B cell (primary cell): ENCODE measurements at regions of chr19 and their contacts with region 1.

Region 1: DNA sequence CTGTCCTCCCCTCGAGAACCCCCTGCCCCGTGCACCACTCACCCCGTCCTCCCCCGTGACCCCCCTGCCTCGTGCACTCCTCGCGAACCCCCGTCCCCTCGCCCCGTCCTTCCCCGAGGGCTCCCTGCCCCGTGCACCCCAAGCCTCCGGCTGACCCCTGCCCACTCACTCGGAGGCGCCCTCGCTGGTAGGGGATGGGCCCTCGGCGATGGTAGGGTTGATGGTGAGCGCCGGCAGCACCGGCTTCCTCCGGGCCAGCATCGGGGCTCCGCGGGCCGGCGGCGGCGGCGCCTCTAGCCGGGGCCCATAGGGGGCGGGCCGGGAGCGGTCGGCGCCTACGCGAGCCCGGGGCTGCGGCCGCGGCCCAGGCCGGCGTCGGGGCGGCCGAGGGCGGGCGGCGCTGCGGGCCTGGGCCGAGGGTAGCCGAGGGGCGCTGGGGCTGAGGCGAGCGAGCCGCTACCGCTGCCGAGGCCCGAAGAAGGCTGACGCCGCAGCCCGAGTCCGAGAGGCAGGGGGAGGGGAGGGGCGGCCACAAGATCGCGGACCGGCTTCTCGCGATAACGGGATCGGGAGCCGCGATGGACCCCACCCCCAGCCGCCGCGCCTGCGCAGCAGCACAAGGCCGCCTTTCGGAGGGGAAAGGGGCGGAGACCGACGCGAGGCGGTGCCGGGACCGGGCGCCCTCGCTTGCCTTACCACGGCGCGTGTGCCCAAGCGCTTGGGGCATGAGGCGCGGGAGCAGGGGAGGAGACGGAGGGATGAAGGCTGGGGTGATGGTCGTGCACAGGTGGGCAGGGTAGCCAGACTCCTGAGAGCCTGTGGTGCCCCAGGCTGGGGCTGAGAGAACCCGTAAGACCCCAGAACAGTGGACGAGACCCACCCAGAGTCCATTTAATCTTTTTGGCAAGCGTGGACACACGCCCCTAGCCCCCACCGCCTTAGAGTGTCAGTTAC is at the start of gene MAP2K2:
- DNase-seq: peak; percentile 97
- ATAC-seq: peak; percentile 96
- H3K4me3 ChIP-seq: peak within 1 kb of the TSS; percentile 51 to 81 (median 62)
- H3K4me3 Mint-ChIP-seq: peak within 1 kb of the TSS; percentile 87
- H3K27ac ChIP-seq: peak within 1 kb of the TSS; percentile 56 to 85
- H3K27ac Mint-ChIP-seq: peak within 1 kb of the TSS; percentile 90
- H3K4me1 ChIP-seq: peaks cover 16 to 18% of the 10 kb centered on the region in 2 donors
- H3K4me1 Mint-ChIP-seq: peaks cover 20% of the 10 kb centered on the region
- H3K27me3 ChIP-seq: no peaks in the 10 kb centered on the region
- H3K27me3 Mint-ChIP-seq: no peaks in the 10 kb centered on the region
- CTCF ChIP-seq: no peak
- total RNA-seq, gene MAP2K2: 137 and 138 TPM in 2 replicates

Region 2: GRCh38 chr19:4007021-4007835 is 116.7 kb before region 1 on chr19 and contains the start of gene PIAS4:
- CTCF ChIA-PET with region 1: no interaction called
- POLR2A ChIA-PET with region 1: no interaction called
- intact Hi-C with region 1: loop called (anchors 1 kb)
- DNase-seq: peak; percentile 98
- ATAC-seq: peak; percentile 86
- H3K4me3 ChIP-seq: peak within 1 kb of the TSS; percentile 27 to 84 (median 74)
- H3K4me3 Mint-ChIP-seq: peak within 1 kb of the TSS; percentile 93
- H3K27ac ChIP-seq: peak within 1 kb of the TSS; percentile 55 to 71
- H3K27ac Mint-ChIP-seq: peak within 1 kb of the TSS; percentile 92
- H3K4me1 ChIP-seq: peaks cover 14 to 35% of the 10 kb centered on the region in 2 donors
- H3K4me1 Mint-ChIP-seq: peaks cover 33% of the 10 kb centered on the region
- H3K27me3 ChIP-seq: no peaks in the 10 kb centered on the region
- H3K27me3 Mint-ChIP-seq: no peaks in the 10 kb centered on the region
- CTCF ChIP-seq: no peak
- total RNA-seq, gene PIAS4: 56.8 and 57.2 TPM in 2 replicates

Region 3: DNA sequence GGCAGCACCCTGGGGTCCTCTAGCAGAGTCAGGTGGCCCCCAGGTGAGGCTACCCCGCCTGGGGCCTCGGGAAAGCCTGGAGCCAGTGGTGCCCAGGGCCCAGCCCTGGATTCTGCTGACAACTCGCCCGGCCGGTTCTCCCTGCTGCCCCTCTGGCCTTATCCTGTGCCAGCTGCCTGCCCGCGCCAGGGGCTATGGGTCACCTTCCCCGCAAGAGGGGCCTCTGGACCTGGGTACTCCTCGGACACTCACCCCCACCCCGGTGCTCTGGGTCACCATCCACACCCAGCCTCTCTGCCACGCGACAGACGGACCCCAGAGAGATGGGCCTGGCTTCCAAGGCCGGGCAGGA is 81.2 kb before region 1 on chr19:
- CTCF ChIA-PET with region 1: no interaction called
- POLR2A ChIA-PET with region 1: no interaction called
- intact Hi-C with region 1: no loop called
- DNase-seq: no peak
- ATAC-seq: no peak
- H3K4me3 ChIP-seq: no peak overlapping the region
- H3K4me3 Mint-ChIP-seq: no peak overlapping the region
- H3K27ac ChIP-seq: no peak overlapping the region
- H3K27ac Mint-ChIP-seq: no peak overlapping the region
- H3K4me1 ChIP-seq: no peaks in the 10 kb centered on the region
- H3K4me1 Mint-ChIP-seq: no peaks in the 10 kb centered on the region
- H3K27me3 ChIP-seq: no peaks in the 10 kb centered on the region
- H3K27me3 Mint-ChIP-seq: no peaks in the 10 kb centered on the region
- CTCF ChIP-seq: no peak

Region 4: DNA sequence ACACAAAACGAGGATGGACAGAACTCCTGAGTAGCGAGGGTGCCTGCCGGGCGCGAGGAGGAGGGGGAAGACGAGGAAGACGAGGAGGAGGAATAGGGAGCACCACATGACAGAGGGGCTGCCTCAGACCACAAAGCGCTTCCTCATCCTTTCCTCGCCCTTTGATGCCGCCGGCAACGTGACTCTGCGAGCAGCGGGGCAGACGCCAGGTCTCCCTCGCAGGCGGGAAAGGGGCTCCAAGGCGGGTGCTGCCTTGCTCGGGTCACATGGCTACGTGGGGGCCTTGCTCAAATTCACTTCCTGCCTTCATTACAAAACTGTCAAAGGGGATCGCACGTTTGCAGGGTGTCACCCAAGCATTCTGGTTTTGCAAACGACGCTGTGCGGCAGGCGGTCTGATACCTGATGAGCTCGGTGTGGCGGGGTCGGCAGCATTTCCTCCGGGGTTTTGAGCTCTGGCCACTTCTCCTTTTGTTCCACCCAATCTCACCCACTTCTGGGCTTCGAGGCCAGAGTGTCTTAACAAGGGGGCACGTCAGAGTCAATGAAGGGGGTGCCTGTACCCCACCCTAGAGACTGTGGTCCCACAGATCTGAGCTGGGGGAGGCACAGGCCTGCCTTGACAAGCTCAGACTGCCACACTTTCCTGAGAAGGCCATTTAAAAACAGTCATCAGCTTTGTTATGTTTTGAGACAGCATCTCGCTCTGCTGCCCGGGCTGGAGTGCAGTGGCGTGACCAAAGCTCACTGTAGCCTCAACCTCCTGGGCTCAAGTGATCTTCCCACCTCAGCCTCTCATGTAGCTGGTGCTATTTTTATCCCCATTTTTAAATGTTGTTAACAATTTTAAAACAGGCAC is 14.9 kb before region 1 on chr19:
- CTCF ChIA-PET with region 1: interaction called, 3 read pairs
- POLR2A ChIA-PET with region 1: interaction called, 3 read pairs
- intact Hi-C with region 1: loop called (anchors 2 kb)
- DNase-seq: peak; percentile 93
- ATAC-seq: peak; percentile 87
- H3K4me3 ChIP-seq: peak overlapping the region in 4 of 5 experiments; percentile 34 to 49 (median 40)
- H3K4me3 Mint-ChIP-seq: peak overlapping the region; percentile 88
- H3K27ac ChIP-seq: peak overlapping the region; percentile 82 to 85
- H3K27ac Mint-ChIP-seq: peak overlapping the region; percentile 100
- H3K4me1 ChIP-seq: peaks cover 36 to 55% of the 10 kb centered on the region in 2 donors
- H3K4me1 Mint-ChIP-seq: peaks cover 53% of the 10 kb centered on the region
- H3K27me3 ChIP-seq: no peaks in the 10 kb centered on the region
- H3K27me3 Mint-ChIP-seq: no peaks in the 10 kb centered on the region
- CTCF ChIP-seq: no peak

Region 5: DNA sequence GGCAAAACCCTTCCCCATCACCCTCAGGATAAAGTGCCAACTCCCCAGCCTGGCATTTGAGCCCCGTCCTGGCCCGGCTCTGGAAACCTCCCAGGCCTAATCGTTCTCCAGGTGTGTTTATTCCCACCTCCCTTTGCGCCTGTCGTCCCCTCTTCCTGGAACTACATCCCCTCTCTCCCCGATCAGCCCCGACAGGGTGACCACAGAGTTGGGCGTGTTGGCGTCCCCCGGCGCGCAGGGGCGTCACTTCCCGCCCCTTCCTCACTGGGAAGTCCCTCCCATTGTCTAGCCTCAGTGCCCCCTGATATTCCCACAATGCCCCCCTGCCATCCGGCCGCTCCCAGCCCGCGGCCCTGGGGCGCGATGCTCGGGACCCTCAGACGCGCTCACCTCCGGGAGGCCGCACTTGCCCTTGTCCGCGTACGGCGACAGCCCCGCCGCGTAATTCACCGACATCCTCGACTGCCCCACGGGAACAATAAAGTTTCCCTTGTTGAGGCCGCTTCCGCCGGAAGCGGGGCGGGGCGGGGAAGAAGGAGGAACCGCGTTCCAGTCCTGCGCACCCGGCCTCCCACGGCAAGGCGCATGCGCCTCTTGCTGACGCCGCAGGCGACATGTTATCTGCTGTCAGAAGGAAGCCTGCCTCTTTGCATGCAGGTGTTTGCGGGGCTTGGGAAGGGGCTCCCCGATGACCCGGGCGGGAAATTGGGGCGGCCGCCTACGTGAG is 58.4 kb after region 1 on chr19 and contains the starts of genes ANKRD24 and SIRT6:
- CTCF ChIA-PET with region 1: no interaction called
- POLR2A ChIA-PET with region 1: no interaction called
- intact Hi-C with region 1: loop called (anchors 5 kb)
- DNase-seq: peak; percentile 97
- ATAC-seq: peak; percentile 83
- H3K4me3 ChIP-seq: peak within 1 kb of the TSS; percentile 65 to 91 (median 85)
- H3K4me3 Mint-ChIP-seq: peak within 1 kb of the TSS; percentile 99
- H3K27ac ChIP-seq: peak within 1 kb of the TSS; percentile 72 to 95
- H3K27ac Mint-ChIP-seq: peak within 1 kb of the TSS; percentile 98
- H3K4me1 ChIP-seq: peaks cover 20 to 32% of the 10 kb centered on the region in 2 donors
- H3K4me1 Mint-ChIP-seq: peaks cover 37% of the 10 kb centered on the region
- H3K27me3 ChIP-seq: no peaks in the 10 kb centered on the region
- H3K27me3 Mint-ChIP-seq: peaks cover 6% of the 10 kb centered on the region
- CTCF ChIP-seq: no peak
- total RNA-seq, gene ANKRD24: 0.37 and 1.4 TPM in 2 replicates
- total RNA-seq, gene SIRT6: 27.8 and 30.4 TPM in 2 replicates

Region 6: GRCh38 chr19:4284176-4284958 is 160.5 kb after region 1 on chr19:
- CTCF ChIA-PET with region 1: no interaction called
- POLR2A ChIA-PET with region 1: no interaction called
- intact Hi-C with region 1: no loop called
- DNase-seq: no peak
- ATAC-seq: no peak
- H3K4me3 ChIP-seq: no peak overlapping the region
- H3K4me3 Mint-ChIP-seq: no peak overlapping the region
- H3K27ac ChIP-seq: no peak overlapping the region
- H3K27ac Mint-ChIP-seq: no peak overlapping the region
- H3K4me1 ChIP-seq: peaks cover 4 to 6% of the 10 kb centered on the region in 2 donors
- H3K4me1 Mint-ChIP-seq: peaks cover 2% of the 10 kb centered on the region
- H3K27me3 ChIP-seq: peaks cover 0 to 25% (median 5%) of the 10 kb centered on the region in 4 experiments
- H3K27me3 Mint-ChIP-seq: peaks cover 12% of the 10 kb centered on the region
- CTCF ChIP-seq: no peak